Uterus (tissue), 4 donors: ENCODE measurements at regions of chr11 and their contacts with region 1.

Region 1: DNA sequence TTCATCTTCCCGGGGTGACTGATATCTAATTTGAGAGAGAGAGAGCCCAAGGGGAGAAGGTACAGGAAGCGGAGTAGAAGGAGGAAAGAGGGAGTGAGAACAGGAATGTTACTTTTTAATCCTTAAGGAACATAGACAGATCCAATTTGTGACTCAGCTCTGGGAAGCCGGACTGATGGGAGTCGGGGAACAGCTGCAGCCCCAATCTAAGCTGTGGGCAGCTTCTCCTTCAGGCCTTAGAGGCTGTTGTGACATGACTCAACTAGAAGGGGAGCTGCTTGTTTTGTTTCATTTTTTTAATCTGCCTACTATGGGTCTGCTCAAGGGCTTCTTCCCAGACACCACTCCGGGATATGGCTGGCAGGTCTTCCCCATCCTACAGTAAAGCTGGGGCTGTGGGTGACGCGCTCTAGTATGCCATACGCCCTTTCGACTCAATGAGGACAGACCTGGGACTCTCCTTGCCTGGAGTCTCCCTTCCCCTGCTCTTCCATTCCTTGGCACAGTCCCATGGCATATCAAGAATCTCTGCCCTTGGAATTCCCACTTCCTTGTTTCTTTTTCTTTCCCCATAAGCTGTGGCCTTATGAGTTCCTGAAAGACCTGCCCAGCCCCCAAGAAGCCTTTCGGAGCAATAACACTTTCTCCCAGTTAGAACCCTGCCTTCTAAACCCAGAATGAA is 103.3 kb upstream of the AKIP1 start:
- DNase-seq: peak; percentile 69 to 80
- H3K4me3 ChIP-seq: peak overlapping the region; percentile 50 to 73
- H3K27ac ChIP-seq: peak overlapping the region; percentile 90 to 96
- H3K4me1 ChIP-seq: peaks cover 11 to 13% of the 10 kb centered on the region in 2 donors
- H3K27me3 ChIP-seq: no peaks in the 10 kb centered on the region
- CTCF ChIP-seq: no peak
- POLR2A ChIP-seq: no peak

Region 2: DNA sequence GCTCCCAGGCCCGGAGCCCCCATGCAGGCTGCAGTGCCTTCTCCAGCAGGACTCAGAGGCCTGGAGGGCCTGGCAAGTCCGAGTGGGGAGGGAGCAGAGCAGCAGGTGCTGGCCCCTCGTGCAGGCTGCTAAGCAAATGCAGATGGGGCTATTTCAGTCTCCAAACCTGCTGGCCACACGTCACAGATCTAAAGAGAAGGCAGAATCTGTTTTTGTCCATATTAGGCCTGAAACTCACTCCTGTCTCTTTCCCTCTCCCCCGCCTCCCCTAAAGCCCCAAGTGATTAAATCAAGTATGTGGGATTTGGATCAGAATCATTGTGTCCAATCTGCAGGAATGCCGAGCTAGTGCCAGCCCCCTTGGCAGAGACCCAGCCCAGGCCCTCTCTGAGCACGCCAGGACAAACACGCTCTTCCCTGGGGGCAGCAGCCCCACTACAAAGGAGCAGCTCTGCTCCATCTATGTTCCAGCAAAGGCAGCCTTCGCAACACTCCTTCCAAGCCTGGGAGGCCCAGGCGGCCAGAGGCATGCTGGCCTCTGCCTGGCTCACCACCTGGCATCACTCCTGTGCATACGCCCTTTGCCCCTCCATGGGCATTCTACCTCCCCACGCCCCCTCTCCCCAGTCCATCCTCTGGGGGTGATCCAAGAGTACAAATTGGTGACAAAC is 98.5 kb before region 1 on chr11:
- intact Hi-C with region 1: loop called (anchors 10 kb)
- DNase-seq: peak; percentile 97 to 98
- H3K4me3 ChIP-seq: no peak overlapping the region
- H3K27ac ChIP-seq: peak overlapping the region; percentile 94 to 99
- H3K4me1 ChIP-seq: peaks cover 6 to 27% of the 10 kb centered on the region in 2 donors
- H3K27me3 ChIP-seq: no peaks in the 10 kb centered on the region
- CTCF ChIP-seq: no peak
- POLR2A ChIP-seq: peak; percentile 77 to 81